ENCODE measurements at regions of chr9 and their contacts with region 1.

Region 1: DNA sequence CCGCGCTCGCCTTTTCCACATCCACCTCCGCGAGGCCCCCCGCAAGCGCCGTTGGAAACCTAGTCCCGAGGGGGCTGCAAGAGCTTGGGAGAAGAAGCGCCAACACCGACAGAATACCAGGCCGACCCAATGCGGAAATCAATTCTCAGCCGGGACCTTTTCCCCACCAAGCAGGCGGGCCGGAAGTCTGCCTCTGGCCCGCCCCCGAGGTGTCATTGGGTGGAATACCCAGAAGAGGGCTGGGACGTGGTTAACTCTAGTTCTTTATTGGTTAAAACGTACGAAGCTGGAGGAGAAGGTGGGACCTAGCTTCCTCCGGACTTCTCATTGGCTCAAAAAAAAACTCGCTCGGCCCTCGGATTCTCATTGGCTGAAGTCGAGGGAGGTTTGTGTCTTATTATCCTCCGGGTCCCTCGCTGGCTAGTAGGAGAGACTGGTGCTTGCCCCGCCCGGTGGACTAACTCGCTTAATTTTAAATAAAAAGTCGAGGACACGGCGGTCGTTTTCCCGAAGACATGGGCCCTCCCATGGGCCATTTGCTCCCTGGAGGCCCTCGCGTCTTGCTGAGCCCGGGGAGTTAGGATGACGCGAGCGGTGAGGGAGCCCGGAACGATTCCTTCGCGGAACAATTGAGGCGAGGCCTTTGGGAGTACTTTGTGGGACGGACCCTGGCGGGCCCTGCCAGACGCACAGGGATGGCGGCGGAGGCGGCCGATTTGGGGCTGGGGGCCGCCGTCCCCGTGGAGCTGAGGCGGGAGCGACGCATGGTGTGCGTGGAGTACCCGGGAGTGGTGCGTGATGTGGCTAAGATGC is at the start of gene GTF3C5:
- H3K4me3 ChIP-seq: peak within 1 kb of the TSS; percentile 75
- H3K27ac ChIP-seq: peak within 1 kb of the TSS; percentile 35; the same call in 1 of the 2 replicates
- H3K4me1 ChIP-seq: no peaks in the 10 kb centered on the region
- CTCF ChIP-seq: peak; percentile 46

Region 2: GRCh38 chr9:133009906-133010582 is 20.5 kb before region 1 on chr9:
- CTCF ChIA-PET with region 1: interaction called, 4 read pairs
- POLR2A ChIA-PET with region 1: interaction called, 12 read pairs
- H3K4me3 ChIP-seq: no peak overlapping the region
- H3K27ac ChIP-seq: no peak overlapping the region
- H3K4me1 ChIP-seq: no peaks in the 10 kb centered on the region
- CTCF ChIP-seq: no peak

Region 3: GRCh38 chr9:133075925-133076630 is 45.6 kb after region 1 on chr9:
- CTCF ChIA-PET with region 1: interaction called, 3 read pairs
- POLR2A ChIA-PET with region 1: interaction called, 14 read pairs
- H3K4me3 ChIP-seq: no peak overlapping the region
- H3K27ac ChIP-seq: no peak overlapping the region
- H3K4me1 ChIP-seq: no peaks in the 10 kb centered on the region
- CTCF ChIP-seq: no peak

Region 4: DNA sequence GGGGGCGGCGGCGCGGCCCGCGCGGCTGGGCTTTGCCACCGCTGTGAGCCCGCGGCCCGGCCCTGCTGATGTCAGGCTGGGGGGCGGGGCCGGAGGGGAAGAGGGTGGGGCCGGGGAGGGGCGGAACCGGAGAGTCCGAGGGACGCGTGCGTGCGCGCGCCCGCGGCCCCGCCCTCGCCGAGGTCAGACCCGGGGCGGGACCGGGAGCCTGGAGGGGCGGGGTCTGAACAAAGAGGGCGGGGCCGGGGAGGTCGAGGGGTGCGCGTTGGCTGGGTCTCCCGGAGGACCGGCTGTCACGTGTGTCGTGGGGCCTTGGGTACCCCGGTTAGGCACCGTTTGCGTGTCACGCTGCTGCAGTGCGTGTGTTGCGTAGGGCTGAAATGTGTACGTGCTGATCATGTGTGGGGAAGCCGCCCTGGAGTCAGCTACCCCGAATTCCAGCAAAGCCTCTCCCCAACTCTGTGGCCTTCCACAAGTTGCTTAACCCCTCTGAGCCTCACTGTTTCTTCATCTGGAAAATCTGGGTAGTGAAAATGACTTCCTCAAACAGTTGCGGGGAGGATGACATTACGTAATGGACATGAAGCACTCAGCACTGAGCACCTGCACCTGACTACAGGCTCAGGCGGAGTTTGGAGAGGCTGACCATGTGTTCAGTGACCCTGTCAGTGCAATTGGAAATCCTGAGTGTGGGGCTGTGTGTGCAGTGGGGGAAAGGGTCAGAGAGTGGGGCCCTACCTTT is 90.8 kb after region 1 on chr9 and contains the start of gene RALGDS:
- CTCF ChIA-PET with region 1: interaction called, 13 read pairs
- POLR2A ChIA-PET with region 1: interaction called, 24 read pairs
- H3K4me3 ChIP-seq: peak within 1 kb of the TSS; percentile 66
- H3K27ac ChIP-seq: peak within 1 kb of the TSS; percentile 74; the same call in 1 of the 2 replicates
- H3K4me1 ChIP-seq: peaks cover 5% of the 10 kb centered on the region; the same call in 1 of the 2 replicates
- CTCF ChIP-seq: no peak

Region 5: DNA sequence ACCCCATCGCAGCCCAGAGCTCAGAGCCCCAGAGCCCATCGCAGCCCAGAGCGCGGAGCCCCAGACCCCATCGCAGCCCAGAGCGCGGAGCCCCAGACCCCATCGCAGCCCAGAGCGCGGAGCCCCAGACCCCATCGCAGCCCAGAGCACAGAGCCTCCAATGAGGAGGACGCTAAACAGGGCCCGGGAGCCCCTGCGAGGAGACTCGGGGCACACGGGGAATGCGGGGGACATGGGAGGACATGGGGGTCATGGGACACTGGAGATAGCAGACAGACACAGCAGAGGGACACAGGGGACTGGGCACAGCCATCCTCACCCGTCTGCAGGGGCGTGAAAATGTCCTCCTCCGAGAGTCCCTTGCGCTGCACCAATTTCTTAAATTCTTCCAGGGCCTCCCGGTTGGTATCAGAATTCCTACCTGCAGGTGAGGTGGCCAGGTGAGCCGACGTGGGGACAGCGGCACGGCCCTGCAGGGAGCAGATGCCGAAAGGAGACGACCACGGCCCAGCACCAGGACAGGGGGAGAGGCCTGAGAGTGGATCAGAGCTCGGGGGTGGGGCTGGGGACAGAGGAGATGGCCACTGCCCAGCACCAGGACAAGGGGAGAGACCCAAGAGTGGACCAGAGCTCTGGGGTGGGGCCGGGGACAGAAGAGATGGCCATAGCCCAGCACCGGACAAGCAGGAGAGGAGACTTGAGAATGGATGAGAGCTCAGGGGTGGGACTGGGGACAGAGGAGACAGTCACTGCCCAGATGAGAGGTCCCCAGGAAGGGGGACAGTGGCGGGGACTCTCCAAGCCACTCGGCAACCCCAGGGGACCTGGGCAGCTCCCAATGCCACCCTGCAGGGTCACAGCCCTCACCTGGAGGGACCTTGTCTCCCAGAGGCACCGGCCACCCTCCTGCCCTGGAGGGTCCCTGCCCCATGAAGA is 175.7 kb after region 1 on chr9:
- CTCF ChIA-PET with region 1: no interaction called
- POLR2A ChIA-PET with region 1: no interaction called
- H3K4me3 ChIP-seq: no peak overlapping the region
- H3K27ac ChIP-seq: no peak overlapping the region
- H3K4me1 ChIP-seq: no peaks in the 10 kb centered on the region
- CTCF ChIP-seq: no peak

Region 6: DNA sequence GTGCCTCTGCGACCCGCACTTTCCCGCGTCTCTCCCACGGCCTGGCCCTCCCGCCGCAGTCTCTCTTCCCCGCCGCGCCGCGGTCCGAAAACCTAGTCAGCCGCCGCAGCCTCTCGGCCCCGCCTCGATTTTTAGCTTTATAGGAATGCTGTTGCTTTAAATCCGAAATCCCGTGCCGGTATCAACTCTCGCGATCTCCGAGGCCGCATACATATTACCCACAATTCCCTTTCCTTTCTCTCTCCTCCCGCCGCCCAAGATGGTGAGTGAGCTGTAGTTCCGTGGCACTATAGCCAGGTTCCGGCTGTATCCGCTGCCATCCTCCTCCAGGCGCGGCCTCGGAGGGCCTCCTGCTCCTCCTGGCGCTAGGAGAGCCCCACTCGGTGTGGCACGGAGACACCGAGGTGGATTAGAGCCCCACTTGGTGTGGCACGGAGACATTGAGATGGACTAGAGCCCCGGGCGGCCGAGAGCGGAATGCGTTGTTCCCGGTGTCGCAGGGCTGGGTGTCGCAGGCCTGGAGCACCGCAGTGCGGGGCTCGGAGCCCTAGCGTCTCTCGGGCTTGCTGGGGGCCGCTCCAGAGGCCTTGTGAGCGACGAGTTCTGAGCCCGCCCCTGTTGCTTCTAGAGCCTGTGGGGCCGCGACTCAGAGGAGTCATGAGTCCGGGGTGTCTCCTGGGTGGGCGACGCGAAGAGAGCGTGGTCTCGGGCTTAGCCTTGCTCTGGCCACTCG is 317.6 kb after region 1 on chr9 and contains the starts of genes MED22 and RPL7A:
- CTCF ChIA-PET with region 1: no interaction called
- POLR2A ChIA-PET with region 1: interaction called, 15 read pairs
- H3K4me3 ChIP-seq: peak within 1 kb of the TSS; percentile 91
- H3K27ac ChIP-seq: peak within 1 kb of the TSS; percentile 100
- H3K4me1 ChIP-seq: no peaks in the 10 kb centered on the region
- CTCF ChIP-seq: peak; percentile 58; the same call in 1 of the 2 replicates

Measured in HEK293 (cell line).